Heart right ventricle (tissue), 16 donors: ENCODE measurements at regions of chr3 and their contacts with region 1.

Region 1: GRCh38 chr3:192082730-192083660 is 622.0 kb downstream of the PYDC2 start:
- DNase-seq: no peak
- ATAC-seq: no peak
- H3K4me3 ChIP-seq: no peak overlapping the region
- H3K27ac ChIP-seq: no peak overlapping the region
- H3K4me1 ChIP-seq: peaks cover 0 to 7% (median 0%) of the 10 kb centered on the region in 9 donors
- H3K27me3 ChIP-seq: no peaks in the 10 kb centered on the region
- CTCF ChIP-seq: no peak

Region 2: GRCh38 chr3:192022412-192022811 is 60.6 kb before region 1 on chr3:
- intact Hi-C with region 1: loop called in 1 of 10 experiments (anchors 10 kb)
- DNase-seq: no peak
- ATAC-seq: no peak
- H3K4me3 ChIP-seq: no peak overlapping the region
- H3K27ac ChIP-seq: no peak overlapping the region
- H3K4me1 ChIP-seq: no peaks in the 10 kb centered on the region
- H3K27me3 ChIP-seq: no peaks in the 10 kb centered on the region
- CTCF ChIP-seq: no peak